ENCODE measurements at regions of chr4 and their contacts with region 1.

Region 1: GRCh38 chr4:154018659-154019058 is 229.8 kb upstream of the SFRP2 start:
- DNase-seq: no peak
- H3K4me3 Mint-ChIP-seq: no peak overlapping the region
- H3K27ac Mint-ChIP-seq: no peak overlapping the region
- H3K4me1 Mint-ChIP-seq: no peaks in the 10 kb centered on the region
- H3K27me3 Mint-ChIP-seq: peaks cover 1% of the 10 kb centered on the region

Region 2: DNA sequence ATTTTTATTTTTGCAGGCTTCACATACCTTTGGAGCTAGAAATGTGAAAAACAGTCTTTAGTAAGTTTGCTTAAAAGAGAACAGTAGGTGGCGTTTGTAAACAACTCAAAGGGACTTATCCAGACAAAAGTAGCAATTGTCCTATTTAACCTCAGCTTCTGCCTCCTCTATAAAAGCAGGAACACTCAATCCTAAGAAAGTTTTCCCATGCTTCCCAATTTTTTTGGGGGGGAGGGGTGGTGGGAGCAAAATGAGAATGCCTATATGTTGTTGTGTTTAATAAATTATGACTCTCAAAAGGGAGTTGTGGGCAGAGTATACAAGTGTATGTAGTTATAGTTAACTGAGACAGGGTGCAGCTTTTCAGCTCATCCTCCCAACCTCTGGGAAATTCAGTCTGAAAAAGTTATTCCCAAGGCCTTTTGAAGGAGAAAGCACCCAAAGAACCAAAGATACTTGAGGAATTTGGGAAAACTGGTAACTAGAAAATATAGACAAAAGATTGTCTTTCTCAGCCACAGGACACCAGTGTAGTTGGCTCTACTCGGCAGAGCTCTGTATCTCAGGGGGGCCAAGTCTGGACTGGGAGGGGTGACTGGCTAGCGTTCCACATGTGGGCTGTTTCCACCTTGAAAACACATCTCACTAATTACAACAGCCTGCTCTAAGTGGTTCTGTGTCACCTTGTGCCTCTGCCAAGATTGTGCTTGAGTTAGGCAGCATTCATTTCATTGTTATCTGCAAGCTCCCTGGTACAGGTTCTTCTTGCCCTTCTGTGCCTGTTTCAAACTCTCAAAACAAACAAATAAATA is 232.5 kb before region 1 on chr4:
- intact Hi-C with region 1: loop called (anchors 5 kb)
- DNase-seq: no peak
- H3K4me3 Mint-ChIP-seq: no peak overlapping the region
- H3K27ac Mint-ChIP-seq: no peak overlapping the region
- H3K4me1 Mint-ChIP-seq: peaks cover 4% of the 10 kb centered on the region
- H3K27me3 Mint-ChIP-seq: peaks cover 79% of the 10 kb centered on the region

Measured in activated T-helper 2 cell treated with anti-CD3 and anti-CD28 coated beads, Interferon-gamma antibody, Interleukin-2, Interleukin-4, amounts not matched to agents 10 μg/mL and 5 μg/mL and 100 μg/mL, durations not matched to agents 14 hours and 24 hours and 36 hours (primary cell).